ENCODE measurements at regions of chr4 and their contacts with region 1.

Region 1: GRCh38 chr4:25770847-25771246 is 91.9 kb downstream of the SEL1L3 start:
- DNase-seq: no peak
- H3K4me3 ChIP-seq: no peak overlapping the region
- CTCF ChIP-seq: no peak

Region 2: DNA sequence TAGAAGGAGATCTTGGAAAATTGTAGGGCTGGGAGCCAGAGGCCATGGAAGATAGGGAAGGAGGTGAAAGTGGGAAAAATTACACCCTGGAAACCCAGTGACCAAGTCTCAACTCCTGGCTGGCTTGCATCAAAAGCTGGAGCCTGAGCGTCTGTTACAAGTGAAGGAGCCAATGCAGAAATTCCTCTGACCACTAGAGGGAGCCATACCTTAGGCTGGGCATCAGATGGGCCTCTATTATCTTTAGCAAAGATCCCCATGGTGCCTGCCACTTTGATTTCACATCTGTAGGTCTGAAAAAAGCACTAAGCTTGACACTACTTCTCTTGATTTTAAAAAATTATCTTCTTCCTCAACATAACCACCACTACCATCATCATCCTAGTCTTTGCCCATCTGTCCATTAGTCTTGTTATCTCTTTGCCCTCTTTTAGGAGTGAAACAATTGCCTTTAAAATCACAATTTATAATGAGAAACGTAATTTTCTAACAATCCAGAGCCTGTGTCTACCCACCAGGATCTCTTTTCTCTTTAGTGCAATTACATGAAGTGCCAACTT is 330.8 kb before region 1 on chr4:
- in situ Hi-C with region 1: loop called (anchors 5 kb)
- DNase-seq: peak; percentile 53
- H3K4me3 ChIP-seq: no peak overlapping the region
- CTCF ChIP-seq: peak; percentile 94

Measured in astrocyte of the cerebellum (primary cell).